K562 (cell line): ENCODE measurements at regions of chr9 and their contacts with region 1.

Region 1: GRCh38 chr9:72592502-72593403 is 71.3 kb downstream of the TMC1 start:
- DNase-seq: peak; percentile 47 to 61 (median 54)
- ATAC-seq: peak; percentile 85
- H3K4me3 ChIP-seq: no peak overlapping the region
- H3K27ac ChIP-seq: no peak overlapping the region
- H3K4me1 ChIP-seq: peaks cover 0 to 7% of the 10 kb centered on the region in 2 experiments; a peak in 3 of 5 replicates
- H3K27me3 ChIP-seq: no peaks in the 10 kb centered on the region
- CTCF ChIP-seq: peak; percentile 39 to 69 (median 66); a peak in 5 of 6 replicates
- EP300 ChIP-seq: no peak
- POLR2A ChIP-seq: no peak
- RAD21 ChIP-seq: peak; percentile 75 to 79

Region 2: GRCh38 chr9:71446473-71447411 is 1146.0 kb before region 1 on chr9:
- CTCF ChIA-PET with region 1: no interaction called
- POLR2A ChIA-PET with region 1: no interaction called
- in situ Hi-C with region 1: no loop called
- intact Hi-C with region 1: no loop called
- DNase-seq: peak in 3 of 4 experiments; percentile 3 to 16 (median 15)
- ATAC-seq: peak; percentile 84
- H3K4me3 ChIP-seq: no peak overlapping the region
- H3K27ac ChIP-seq: no peak overlapping the region
- H3K4me1 ChIP-seq: peaks cover 0 to 7% of the 10 kb centered on the region in 2 experiments; a peak in 1 of 5 replicates
- H3K27me3 ChIP-seq: peaks cover 2 to 10% of the 10 kb centered on the region in 2 experiments; a peak in 3 of 5 replicates
- CTCF ChIP-seq: peak in 2 of 3 experiments; percentile 23 to 66; a peak in 3 of 6 replicates
- EP300 ChIP-seq: no peak
- POLR2A ChIP-seq: no peak
- RAD21 ChIP-seq: no peak

Region 3: DNA sequence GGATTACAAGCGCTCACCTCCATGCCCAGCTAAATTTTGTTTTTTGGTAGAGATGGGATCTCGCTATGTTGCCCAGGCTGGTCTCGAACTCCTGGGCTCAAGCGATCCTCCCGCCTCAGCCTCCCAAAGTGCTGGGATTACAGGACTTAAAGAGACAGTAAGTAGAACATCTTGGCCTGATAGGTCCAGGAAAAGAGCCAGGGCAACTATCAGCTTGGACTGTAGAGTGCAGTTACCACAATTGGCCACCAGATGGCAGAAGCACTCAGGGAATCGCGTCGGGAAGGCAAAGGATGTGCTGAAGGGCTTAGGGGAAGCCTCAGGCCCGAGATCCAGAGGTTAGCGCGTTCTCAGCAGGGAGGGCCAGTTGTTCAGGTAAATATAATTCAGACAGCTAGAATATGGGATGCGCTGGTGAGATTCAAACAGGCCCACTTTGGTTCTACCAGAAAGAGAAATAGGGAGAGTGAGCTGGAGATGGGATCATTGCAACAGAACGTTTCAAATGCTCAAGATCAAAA is 553.8 kb before region 1 on chr9:
- CTCF ChIA-PET with region 1: no interaction called
- POLR2A ChIA-PET with region 1: no interaction called
- in situ Hi-C with region 1: loop called (anchors 10 kb)
- intact Hi-C with region 1: loop called (anchors 2 kb)
- DNase-seq: peak; percentile 59 to 73 (median 69)
- ATAC-seq: peak; percentile 93
- H3K4me3 ChIP-seq: no peak overlapping the region
- H3K27ac ChIP-seq: no peak overlapping the region
- H3K4me1 ChIP-seq: no peaks in the 10 kb centered on the region
- H3K27me3 ChIP-seq: peaks cover 0 to 14% of the 10 kb centered on the region in 2 experiments; a peak in 4 of 5 replicates
- CTCF ChIP-seq: peak; percentile 79 to 87 (median 86)
- EP300 ChIP-seq: no peak
- POLR2A ChIP-seq: no peak
- RAD21 ChIP-seq: peak; percentile 89 to 93

Region 4: DNA sequence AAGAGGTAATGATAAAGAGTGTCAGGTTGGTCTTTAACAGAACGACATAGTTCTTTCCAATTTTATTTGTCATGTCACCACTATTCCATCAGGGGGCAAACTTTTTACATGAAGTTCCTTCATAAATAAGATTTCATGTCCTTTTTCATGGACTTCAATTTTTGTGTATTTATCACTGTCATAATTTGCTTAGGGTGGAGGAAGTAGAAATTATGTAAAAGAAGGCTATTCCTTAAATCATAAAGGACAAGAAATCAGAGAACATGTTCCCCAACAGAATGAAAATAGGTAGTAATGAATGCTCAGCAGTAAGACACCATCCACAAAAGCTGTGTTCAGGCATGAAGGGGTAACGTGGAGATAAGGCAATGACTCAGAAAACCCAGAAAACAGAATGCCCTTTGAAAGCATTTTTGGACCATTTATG is 300.5 kb before region 1 on chr9:
- CTCF ChIA-PET with region 1: no interaction called
- POLR2A ChIA-PET with region 1: no interaction called
- in situ Hi-C with region 1: no loop called
- intact Hi-C with region 1: loop called (anchors 2 kb)
- DNase-seq: peak in 1 of 4 experiments; percentile 13
- ATAC-seq: no peak
- H3K4me3 ChIP-seq: no peak overlapping the region
- H3K27ac ChIP-seq: no peak overlapping the region
- H3K4me1 ChIP-seq: no peaks in the 10 kb centered on the region; a peak in 2 of 5 replicates
- H3K27me3 ChIP-seq: peaks cover 0 to 6% of the 10 kb centered on the region in 2 experiments; a peak in 2 of 5 replicates
- CTCF ChIP-seq: peak in 2 of 3 experiments; percentile 27 to 48; a peak in 3 of 6 replicates
- EP300 ChIP-seq: no peak
- POLR2A ChIP-seq: no peak
- RAD21 ChIP-seq: peak; percentile 50 to 63

Region 5: DNA sequence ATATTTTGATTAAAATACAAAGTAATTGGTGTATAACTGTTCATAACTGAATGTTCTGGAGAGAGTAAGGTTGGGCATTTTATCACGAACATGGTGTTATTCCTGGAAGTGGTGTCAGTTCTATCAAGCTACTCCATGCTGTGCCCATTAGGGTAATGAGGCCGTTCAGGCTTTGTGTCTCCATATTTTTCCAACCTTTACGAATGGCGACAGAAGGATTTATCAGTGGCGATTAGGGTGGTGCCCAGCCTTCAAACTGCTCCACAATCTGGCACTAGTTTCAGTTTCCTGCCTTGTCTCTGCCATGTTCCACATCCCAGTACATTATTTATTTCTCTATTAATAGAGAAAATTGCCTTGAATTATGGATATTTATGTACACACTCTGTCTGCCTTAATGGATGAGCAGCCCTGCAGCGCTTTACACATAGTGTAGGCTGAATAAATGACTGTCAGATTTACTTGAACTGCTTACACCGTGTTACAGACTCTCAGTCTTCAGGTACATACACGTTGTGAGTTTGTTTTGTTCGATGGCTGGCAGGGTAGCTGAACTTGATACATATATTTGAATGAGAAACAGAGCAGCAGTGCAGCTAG is 95.2 kb before region 1 on chr9:
- CTCF ChIA-PET with region 1: no interaction called
- POLR2A ChIA-PET with region 1: no interaction called
- in situ Hi-C with region 1: no loop called
- intact Hi-C with region 1: loop called (anchors 1 kb)
- DNase-seq: no peak
- ATAC-seq: no peak; the same call in 2 of the 3 replicates
- H3K4me3 ChIP-seq: no peak overlapping the region
- H3K27ac ChIP-seq: no peak overlapping the region
- H3K4me1 ChIP-seq: no peaks in the 10 kb centered on the region; a peak in 2 of 5 replicates
- H3K27me3 ChIP-seq: no peaks in the 10 kb centered on the region
- CTCF ChIP-seq: no peak
- EP300 ChIP-seq: no peak
- POLR2A ChIP-seq: no peak
- RAD21 ChIP-seq: no peak

Region 6: GRCh38 chr9:72827950-72828731 is 235.4 kb after region 1 on chr9:
- CTCF ChIA-PET with region 1: no interaction called
- POLR2A ChIA-PET with region 1: no interaction called
- in situ Hi-C with region 1: no loop called
- intact Hi-C with region 1: loop called (anchors 10 kb)
- DNase-seq: no peak
- ATAC-seq: no peak
- H3K4me3 ChIP-seq: no peak overlapping the region
- H3K27ac ChIP-seq: no peak overlapping the region
- H3K4me1 ChIP-seq: no peaks in the 10 kb centered on the region
- H3K27me3 ChIP-seq: no peaks in the 10 kb centered on the region; a peak in 2 of 5 replicates
- CTCF ChIP-seq: no peak
- EP300 ChIP-seq: no peak
- POLR2A ChIP-seq: no peak
- RAD21 ChIP-seq: no peak

Region 7: DNA sequence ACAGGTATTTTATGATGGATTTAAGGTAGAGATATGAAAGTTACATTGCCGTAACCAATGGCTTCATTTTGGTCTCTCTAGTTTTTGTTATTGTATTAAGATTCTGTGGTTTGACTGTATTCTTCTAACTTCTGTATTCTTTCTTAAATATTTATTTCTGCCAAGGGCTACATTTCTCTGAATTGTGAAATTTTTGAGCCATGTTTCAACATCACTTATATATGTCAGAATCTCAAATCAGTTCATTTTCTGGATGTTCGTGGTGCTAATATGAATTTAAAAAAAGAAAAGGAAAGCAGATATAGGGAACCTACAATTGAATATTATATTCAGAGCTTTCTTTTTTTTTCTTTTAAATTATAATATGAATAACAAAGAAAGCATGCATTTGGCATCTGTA is 701.6 kb after region 1 on chr9:
- CTCF ChIA-PET with region 1: no interaction called
- POLR2A ChIA-PET with region 1: no interaction called
- in situ Hi-C with region 1: no loop called
- intact Hi-C with region 1: no loop called
- DNase-seq: no peak
- ATAC-seq: no peak
- H3K4me3 ChIP-seq: no peak overlapping the region
- H3K27ac ChIP-seq: no peak overlapping the region
- H3K4me1 ChIP-seq: no peaks in the 10 kb centered on the region
- H3K27me3 ChIP-seq: no peaks in the 10 kb centered on the region
- CTCF ChIP-seq: no peak
- EP300 ChIP-seq: no peak
- POLR2A ChIP-seq: no peak
- RAD21 ChIP-seq: no peak